Cardiac septum (tissue), 1 donor: ENCODE measurements at regions of chr15 and their contacts with region 1.

Region 1: GRCh38 chr15:73081321-73081958 is 29.2 kb downstream of the NEO1 start:
- DNase-seq: no peak

Region 2: GRCh38 chr15:72722071-72722696 is 359.3 kb before region 1 on chr15:
- intact Hi-C with region 1: loop called (anchors 5 kb)
- DNase-seq: no peak

Region 3: DNA sequence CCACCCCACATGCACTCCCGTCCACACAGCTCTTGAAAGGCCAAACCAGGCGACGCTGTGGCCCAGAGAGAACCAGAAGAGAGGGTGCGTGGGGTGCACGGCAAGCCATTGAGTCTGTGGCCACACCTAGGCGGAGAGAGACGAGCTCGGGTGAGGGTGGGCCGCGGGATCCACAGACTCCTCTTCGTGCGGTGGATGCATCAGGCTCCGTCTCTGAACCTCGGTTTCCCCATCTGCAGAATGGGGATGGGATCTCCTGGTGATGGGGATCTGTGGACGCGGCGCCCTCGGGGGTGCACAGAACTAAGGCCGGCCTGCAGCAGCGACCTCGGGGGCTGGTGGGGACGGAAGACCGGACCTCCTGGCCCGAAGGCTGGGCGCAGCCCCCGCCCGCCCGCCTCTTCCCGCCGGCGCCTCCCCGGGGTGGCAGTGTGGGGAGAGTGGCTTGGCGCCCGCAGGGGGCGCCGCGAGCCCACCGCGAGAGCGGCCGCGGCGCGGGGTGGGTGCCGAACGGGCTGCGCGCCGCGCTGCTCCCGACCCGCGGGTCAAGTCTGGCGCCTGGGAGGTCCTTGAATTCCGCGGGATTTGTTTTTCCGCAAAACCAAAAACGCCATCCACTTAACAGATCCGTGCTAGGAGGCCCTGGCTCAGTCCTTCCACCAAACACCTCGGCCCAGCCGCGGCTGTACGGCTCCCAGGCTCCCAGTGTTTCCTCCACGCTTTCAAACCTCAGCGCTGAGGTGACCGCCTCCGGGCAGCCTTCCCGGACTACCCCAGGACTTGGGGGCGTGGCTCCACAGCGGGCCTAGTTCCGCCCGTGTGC is 284.7 kb before region 1 on chr15:
- intact Hi-C with region 1: loop called (anchors 2 kb)
- DNase-seq: peak; percentile 90